ENCODE measurements at regions of chr1 and their contacts with region 1.

Region 1: DNA sequence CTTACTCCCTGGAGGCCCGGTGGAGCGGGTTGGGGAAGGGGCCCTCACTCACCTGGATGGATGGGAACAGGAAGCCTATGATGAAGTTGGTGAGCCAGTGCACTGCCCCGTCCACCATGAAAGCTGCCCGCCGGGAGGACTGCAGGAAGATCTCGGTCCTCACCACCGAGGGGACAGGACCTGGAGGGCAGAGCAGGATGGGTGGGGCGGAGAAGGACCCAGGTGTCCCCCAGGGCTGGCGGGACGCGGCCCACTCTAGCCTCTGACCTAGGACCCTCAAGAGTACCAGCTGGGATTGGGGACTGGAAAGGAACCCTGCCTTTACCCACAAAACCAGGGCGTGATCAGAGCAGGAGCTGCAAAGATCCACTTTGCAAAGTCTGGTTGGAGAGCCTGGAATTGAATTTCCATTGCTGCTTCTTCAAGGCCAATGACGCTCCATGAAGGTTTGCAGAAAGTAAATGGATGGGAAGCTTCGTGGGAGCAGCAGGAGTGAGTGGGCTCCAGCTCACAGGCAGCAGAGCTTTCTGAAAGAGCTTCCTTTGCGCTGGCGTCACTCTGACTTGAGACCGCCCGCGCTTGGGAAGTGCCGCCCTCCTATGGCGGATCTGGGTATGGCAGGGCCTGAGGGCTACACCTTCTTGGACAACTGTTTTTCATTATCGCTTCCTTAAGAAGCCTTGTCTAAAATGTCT is 21.4 kb downstream of the SLC2A7 start:
- DNase-seq: peak; percentile 86
- H3K4me3 Mint-ChIP-seq: no peak overlapping the region
- H3K27ac Mint-ChIP-seq: no peak overlapping the region
- H3K4me1 Mint-ChIP-seq: peaks cover 15% of the 10 kb centered on the region
- H3K27me3 Mint-ChIP-seq: peaks cover 12% of the 10 kb centered on the region
- CTCF ChIP-seq: peak; percentile 78

Region 2: DNA sequence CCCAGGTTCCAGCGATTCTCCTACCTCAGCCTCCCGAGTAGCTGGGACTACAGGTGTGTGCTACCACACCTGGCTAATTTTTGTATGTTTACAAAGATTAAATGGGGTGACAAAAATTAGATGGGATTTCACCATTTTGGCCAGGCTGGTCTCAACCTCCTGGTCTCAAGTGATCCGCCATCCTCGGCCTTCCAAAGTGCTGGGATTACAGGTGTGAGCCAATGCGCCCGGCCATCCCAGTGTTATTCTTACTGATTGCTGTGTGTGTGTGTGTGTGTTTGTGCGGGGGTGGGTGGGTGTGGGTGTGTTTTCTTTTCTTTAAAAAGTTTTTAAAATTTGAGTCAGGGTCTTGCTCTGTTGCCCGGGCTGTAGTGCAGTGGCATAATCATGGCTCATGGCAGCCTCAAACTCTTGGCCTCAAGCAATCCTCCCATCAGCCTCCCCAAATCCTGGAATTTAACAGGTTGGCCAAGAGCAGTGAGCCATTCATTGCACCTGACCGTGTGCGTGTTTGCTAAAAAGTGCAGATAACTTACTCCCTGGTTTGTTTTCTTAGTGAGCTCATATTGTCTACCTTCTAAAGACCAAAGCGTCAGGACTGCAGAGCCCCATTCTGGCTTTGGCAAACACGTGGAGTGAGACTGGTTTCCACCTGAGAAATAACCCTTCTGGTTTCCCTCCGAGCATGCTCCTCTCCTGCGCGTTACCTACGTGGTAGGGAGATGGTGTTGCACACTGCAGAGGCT is 91.6 kb before region 1 on chr1:
- CTCF ChIA-PET with region 1: interaction called, 10 read pairs
- intact Hi-C with region 1: loop called (anchors 1 kb)
- DNase-seq: no peak
- H3K4me3 Mint-ChIP-seq: no peak overlapping the region
- H3K27ac Mint-ChIP-seq: no peak overlapping the region
- H3K4me1 Mint-ChIP-seq: peaks cover 5% of the 10 kb centered on the region
- H3K27me3 Mint-ChIP-seq: no peaks in the 10 kb centered on the region
- CTCF ChIP-seq: no peak

Region 3: GRCh38 chr1:8962812-8963530 is 41.9 kb before region 1 on chr1:
- CTCF ChIA-PET with region 1: interaction called, 19 read pairs
- intact Hi-C with region 1: no loop called
- DNase-seq: peak; percentile 58
- H3K4me3 Mint-ChIP-seq: peak overlapping the region; percentile 16
- H3K27ac Mint-ChIP-seq: no peak overlapping the region
- H3K4me1 Mint-ChIP-seq: peaks cover 8% of the 10 kb centered on the region
- H3K27me3 Mint-ChIP-seq: peaks cover 12% of the 10 kb centered on the region
- CTCF ChIP-seq: peak; percentile 46

Region 4: DNA sequence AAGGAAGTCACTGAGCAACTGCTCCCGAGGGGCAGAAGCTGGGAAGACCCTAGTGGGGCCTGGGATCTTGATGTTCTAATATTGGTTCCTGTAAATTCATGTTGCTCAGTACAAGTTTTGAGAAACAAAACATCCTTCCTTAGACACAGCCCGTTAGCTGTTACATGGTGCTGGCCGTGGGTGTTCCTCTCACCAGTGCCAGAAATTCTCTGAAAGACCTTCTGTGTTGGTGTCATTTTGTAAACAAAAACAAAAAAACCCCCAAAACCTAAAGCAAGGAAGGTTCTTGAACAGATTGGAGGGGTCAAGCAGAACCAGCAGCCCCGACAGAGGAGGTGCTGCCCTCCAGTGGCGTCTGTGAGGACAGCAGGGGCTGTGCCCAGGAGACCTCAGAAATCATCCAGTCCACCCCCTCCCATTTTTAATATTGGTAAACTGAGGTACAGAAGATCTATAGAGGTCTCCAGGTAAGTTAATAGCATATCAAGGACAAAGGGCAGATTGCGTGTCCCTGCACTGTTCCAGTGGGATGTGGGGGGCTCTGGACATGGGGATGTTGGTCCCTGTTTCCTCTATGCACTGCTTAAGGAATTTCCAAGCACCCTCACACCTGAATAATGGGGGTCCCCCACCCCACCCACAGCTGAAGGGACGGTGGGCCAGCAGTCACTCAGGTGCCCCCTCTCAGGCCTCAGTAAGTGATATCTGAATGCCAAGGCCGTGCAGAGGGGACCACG is 16.8 kb before region 1 on chr1:
- CTCF ChIA-PET with region 1: interaction called, 10 read pairs
- intact Hi-C with region 1: no loop called
- DNase-seq: peak; percentile 65
- H3K4me3 Mint-ChIP-seq: no peak overlapping the region
- H3K27ac Mint-ChIP-seq: no peak overlapping the region
- H3K4me1 Mint-ChIP-seq: no peaks in the 10 kb centered on the region
- H3K27me3 Mint-ChIP-seq: no peaks in the 10 kb centered on the region
- CTCF ChIP-seq: peak; percentile 68

Region 5: DNA sequence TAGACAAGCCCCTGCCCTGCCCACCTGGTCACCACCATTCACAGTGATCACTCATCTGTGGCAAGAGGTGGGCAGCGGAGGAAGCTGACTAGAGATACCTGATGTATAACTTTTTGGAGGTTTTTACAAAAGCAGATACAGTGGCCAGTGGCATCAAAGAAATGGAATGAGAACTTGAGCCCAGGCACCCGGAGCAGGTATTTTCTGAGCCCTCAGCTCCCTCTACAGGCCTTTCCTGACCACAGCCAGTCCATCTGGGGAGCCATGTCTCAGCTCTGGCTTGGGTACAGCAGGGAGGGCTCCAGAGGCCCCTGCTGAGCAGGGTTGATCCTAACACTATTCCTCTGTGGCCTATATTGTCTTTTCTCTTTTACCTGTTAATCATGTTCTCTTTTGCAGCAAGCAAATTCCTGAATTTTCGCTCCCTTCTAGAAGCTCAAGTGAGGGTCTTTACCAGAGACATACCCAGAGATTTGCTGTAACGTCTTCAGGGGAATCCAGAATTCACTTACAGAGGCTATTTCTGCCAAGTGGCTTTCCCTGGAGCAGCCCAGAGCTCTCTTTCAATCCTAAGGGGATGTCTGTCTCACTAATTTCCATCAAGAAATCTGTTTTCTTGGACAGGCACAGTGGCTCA is 96.8 kb after region 1 on chr1:
- CTCF ChIA-PET with region 1: interaction called, 8 read pairs
- intact Hi-C with region 1: loop called (anchors 5 kb)
- DNase-seq: peak; percentile 50
- H3K4me3 Mint-ChIP-seq: no peak overlapping the region
- H3K27ac Mint-ChIP-seq: no peak overlapping the region
- H3K4me1 Mint-ChIP-seq: no peaks in the 10 kb centered on the region
- H3K27me3 Mint-ChIP-seq: no peaks in the 10 kb centered on the region
- CTCF ChIP-seq: peak; percentile 39